Body of pancreas (tissue), 4 donors: ENCODE measurements at regions of chr13 and their contacts with region 1.

Region 1: GRCh38 chr13:110225609-110226562 is 81.1 kb downstream of the COL4A1 start:
- DNase-seq: no peak
- ATAC-seq: peak; percentile 54
- H3K4me3 ChIP-seq: no peak overlapping the region
- H3K27ac ChIP-seq: peak overlapping the region in 3 of 4 donors; percentile 26 to 58 (median 48)
- H3K4me1 ChIP-seq: peaks cover 8% of the 10 kb centered on the region
- H3K27me3 ChIP-seq: no peaks in the 10 kb centered on the region
- CTCF ChIP-seq: no peak
- POLR2A ChIP-seq: no peak

Region 2: GRCh38 chr13:109900320-109900719 is 325.6 kb before region 1 on chr13:
- intact Hi-C with region 1: no loop called
- DNase-seq: no peak
- ATAC-seq: no peak
- H3K4me3 ChIP-seq: no peak overlapping the region
- H3K27ac ChIP-seq: no peak overlapping the region
- H3K4me1 ChIP-seq: no peaks in the 10 kb centered on the region
- H3K27me3 ChIP-seq: no peaks in the 10 kb centered on the region
- CTCF ChIP-seq: no peak
- POLR2A ChIP-seq: no peak

Region 3: GRCh38 chr13:110409581-110409992 is 183.7 kb after region 1 on chr13:
- intact Hi-C with region 1: loop called (anchors 5 kb)
- DNase-seq: no peak
- ATAC-seq: peak; percentile 5
- H3K4me3 ChIP-seq: no peak overlapping the region
- H3K27ac ChIP-seq: peak overlapping the region in 2 of 4 donors; percentile 16 to 55
- H3K4me1 ChIP-seq: peaks cover 20% of the 10 kb centered on the region
- H3K27me3 ChIP-seq: no peaks in the 10 kb centered on the region
- CTCF ChIP-seq: no peak
- POLR2A ChIP-seq: no peak